ENCODE measurements at regions of chr14 and their contacts with region 1.

Region 1: GRCh38 chr14:91060351-91061055 is at the start of gene RPS6KA5:
- DNase-seq: peak; percentile 100
- ATAC-seq: peak; percentile 87
- H3K4me3 Mint-ChIP-seq: no peak within 1 kb of the TSS
- H3K27ac Mint-ChIP-seq: peak within 1 kb of the TSS; percentile 71
- H3K4me1 Mint-ChIP-seq: peaks cover 58% of the 10 kb centered on the region
- H3K27me3 Mint-ChIP-seq: no peaks in the 10 kb centered on the region
- total RNA-seq, gene RPS6KA5: 11.9 to 13.8 TPM

Region 2: GRCh38 chr14:90331497-90332435 is 728.7 kb before region 1 on chr14 and contains the start of gene NRDE2:
- CTCF ChIA-PET with region 1: no interaction called
- POLR2A ChIA-PET with region 1: no interaction called
- intact Hi-C with region 1: loop called in 1 of 2 experiments (anchors 5 kb)
- DNase-seq: peak; percentile 99
- ATAC-seq: peak; percentile 99
- H3K4me3 Mint-ChIP-seq: peak within 1 kb of the TSS; percentile 89
- H3K27ac Mint-ChIP-seq: peak within 1 kb of the TSS; percentile 93
- H3K4me1 Mint-ChIP-seq: peaks cover 23% of the 10 kb centered on the region
- H3K27me3 Mint-ChIP-seq: peaks cover 2% of the 10 kb centered on the region
- total RNA-seq, gene NRDE2: 22.8 to 25.3 TPM

Region 3: GRCh38 chr14:90827916-90828610 is 232.4 kb before region 1 on chr14:
- CTCF ChIA-PET with region 1: interaction called, 3 read pairs
- POLR2A ChIA-PET with region 1: no interaction called
- intact Hi-C with region 1: loop called in 1 of 2 experiments (anchors 1 kb)
- DNase-seq: peak; percentile 95
- ATAC-seq: peak; percentile 99
- H3K4me3 Mint-ChIP-seq: peak overlapping the region; percentile 68
- H3K27ac Mint-ChIP-seq: peak overlapping the region; percentile 88
- H3K4me1 Mint-ChIP-seq: peaks cover 20% of the 10 kb centered on the region
- H3K27me3 Mint-ChIP-seq: no peaks in the 10 kb centered on the region

Region 4: DNA sequence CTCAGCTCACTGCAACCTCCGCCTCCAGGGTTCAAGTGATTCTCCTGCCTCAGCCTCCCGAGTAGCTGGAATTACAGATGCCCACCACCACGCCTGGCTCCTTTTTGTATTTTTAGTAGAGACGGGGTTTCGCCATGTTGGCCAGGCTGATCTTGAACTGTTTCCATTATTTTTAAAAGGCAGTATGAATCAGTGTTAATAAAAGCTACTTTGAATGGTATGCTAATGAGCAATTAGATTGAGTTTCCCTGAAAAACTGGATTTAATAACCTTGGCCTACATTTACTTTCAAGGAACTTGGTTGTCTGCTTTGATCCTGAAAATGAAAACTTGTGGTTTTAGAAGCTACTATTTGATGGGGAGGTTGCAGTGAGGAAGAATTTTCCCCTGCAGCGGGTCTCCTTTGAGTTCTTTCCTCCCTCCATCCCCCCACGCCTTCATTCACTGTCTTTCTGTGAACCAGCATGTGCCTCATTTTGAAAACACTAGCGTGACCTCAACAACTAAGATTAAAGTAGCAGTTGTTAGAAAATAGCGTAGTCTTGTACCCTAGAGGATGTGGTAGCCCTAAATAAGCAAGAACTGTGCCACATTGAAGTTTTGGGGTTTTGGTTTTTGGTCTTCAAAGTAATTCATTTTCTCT is 17.7 kb after region 1 on chr14:
- CTCF ChIA-PET with region 1: no interaction called
- POLR2A ChIA-PET with region 1: interaction called, 5 read pairs
- intact Hi-C with region 1: loop called (anchors 1 kb)
- DNase-seq: peak; percentile 73
- ATAC-seq: peak; percentile 97
- H3K4me3 Mint-ChIP-seq: peak overlapping the region; percentile 23
- H3K27ac Mint-ChIP-seq: peak overlapping the region; percentile 85
- H3K4me1 Mint-ChIP-seq: peaks cover 30% of the 10 kb centered on the region
- H3K27me3 Mint-ChIP-seq: peaks cover 5% of the 10 kb centered on the region

Region 5: DNA sequence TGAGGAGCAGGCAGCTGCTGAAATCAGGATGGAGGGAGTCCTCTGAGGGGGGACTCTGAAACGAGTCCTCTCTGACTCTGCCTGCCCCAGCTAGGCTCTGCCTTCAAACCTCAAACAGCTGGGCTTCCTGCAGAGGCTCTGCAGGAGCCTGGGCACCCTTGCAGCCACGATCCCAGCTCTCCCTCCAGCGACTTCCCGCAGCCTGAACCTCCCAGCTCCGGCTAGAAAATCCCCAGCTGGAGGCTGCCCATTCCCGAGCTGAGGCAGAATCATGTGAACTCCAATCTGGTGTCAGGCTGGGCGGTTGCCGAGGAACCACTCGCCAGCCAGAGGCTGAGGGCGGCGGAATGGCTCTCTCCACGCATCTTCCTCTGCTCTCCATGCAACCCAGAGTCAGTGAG is 184.0 kb after region 1 on chr14 and contains the start of gene GPR68:
- CTCF ChIA-PET with region 1: no interaction called
- POLR2A ChIA-PET with region 1: interaction called, 7 read pairs
- intact Hi-C with region 1: loop called (anchors 2 to 5 kb)
- DNase-seq: no peak
- ATAC-seq: no peak
- H3K4me3 Mint-ChIP-seq: peak within 1 kb of the TSS; percentile 74
- H3K27ac Mint-ChIP-seq: peak within 1 kb of the TSS; percentile 89
- H3K4me1 Mint-ChIP-seq: peaks cover 95% of the 10 kb centered on the region
- H3K27me3 Mint-ChIP-seq: no peaks in the 10 kb centered on the region
- total RNA-seq, gene GPR68: 9.4 to 11.2 TPM

Region 6: GRCh38 chr14:91418387-91419043 is 358.0 kb after region 1 on chr14:
- CTCF ChIA-PET with region 1: no interaction called
- POLR2A ChIA-PET with region 1: no interaction called
- intact Hi-C with region 1: loop called in 1 of 2 experiments (anchors 1 kb)
- DNase-seq: peak; percentile 88
- ATAC-seq: peak; percentile 20
- H3K4me3 Mint-ChIP-seq: peak overlapping the region; percentile 65
- H3K27ac Mint-ChIP-seq: peak overlapping the region; percentile 82
- H3K4me1 Mint-ChIP-seq: peaks cover 32% of the 10 kb centered on the region
- H3K27me3 Mint-ChIP-seq: no peaks in the 10 kb centered on the region

Measured in activated CD4-positive, alpha-beta T cell treated with anti-CD3 and anti-CD28 coated beads for 36 hours (primary cell).